Heart right ventricle (tissue), 16 donors: ENCODE measurements at regions of chr15 and their contacts with region 1.

Region 1: DNA sequence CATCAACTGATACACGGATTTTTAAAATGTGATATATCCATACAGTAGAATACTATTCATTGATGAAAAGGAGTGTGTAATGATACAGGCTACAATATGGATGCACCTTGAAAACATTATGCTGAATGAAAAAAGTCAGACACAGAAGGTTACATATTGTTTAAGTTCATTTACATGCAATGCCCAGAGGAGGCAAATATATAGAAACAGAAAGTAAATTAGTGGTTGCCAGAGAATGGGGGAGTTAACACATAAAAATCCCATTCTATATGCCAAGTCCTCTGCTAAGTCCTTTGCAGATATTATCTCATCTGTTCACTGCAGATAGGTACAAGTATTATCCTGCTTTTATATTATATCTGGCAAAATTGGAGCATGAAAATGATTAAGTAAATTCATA is 22.1 kb upstream of the CDIN1 start:
- DNase-seq: no peak
- ATAC-seq: no peak
- H3K4me3 ChIP-seq: no peak overlapping the region
- H3K27ac ChIP-seq: no peak overlapping the region
- H3K4me1 ChIP-seq: no peaks in the 10 kb centered on the region
- H3K27me3 ChIP-seq: no peaks in the 10 kb centered on the region
- CTCF ChIP-seq: no peak

Region 2: DNA sequence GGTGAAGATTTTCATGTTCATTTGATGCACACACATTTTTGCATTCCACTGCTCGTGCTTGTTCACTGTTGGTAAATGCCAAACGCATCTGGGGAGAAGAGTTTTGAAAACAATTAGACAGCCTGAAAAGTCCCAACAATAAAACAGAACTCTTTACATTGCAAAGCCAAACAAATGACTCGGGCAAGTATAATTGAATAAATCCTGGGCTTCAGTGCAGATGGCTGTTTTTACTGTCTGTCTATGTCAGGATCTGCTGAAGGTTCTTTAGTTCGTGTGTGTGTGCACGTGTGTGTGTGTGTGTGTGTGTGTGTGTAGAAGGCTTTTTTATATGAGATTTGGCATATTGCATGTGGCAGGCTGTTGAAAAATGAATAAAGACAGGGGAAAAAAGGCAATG is 255.4 kb before region 1 on chr15:
- intact Hi-C with region 1: no loop called
- DNase-seq: no peak
- ATAC-seq: no peak
- H3K4me3 ChIP-seq: no peak overlapping the region
- H3K27ac ChIP-seq: no peak overlapping the region
- H3K4me1 ChIP-seq: no peaks in the 10 kb centered on the region
- H3K27me3 ChIP-seq: no peaks in the 10 kb centered on the region
- CTCF ChIP-seq: no peak

Region 3: GRCh38 chr15:36612063-36612788 is 54.9 kb after region 1 on chr15:
- intact Hi-C with region 1: loop called in 1 of 10 experiments (anchors 5 kb)
- DNase-seq: no peak
- ATAC-seq: peak in 5 of 8 donors; percentile 53 to 82 (median 75)
- H3K4me3 ChIP-seq: no peak overlapping the region
- H3K27ac ChIP-seq: peak overlapping the region in 8 of 10 donors; percentile 18 to 90 (median 56)
- H3K4me1 ChIP-seq: peaks cover 0 to 25% (median 10%) of the 10 kb centered on the region in 9 donors
- H3K27me3 ChIP-seq: no peaks in the 10 kb centered on the region
- CTCF ChIP-seq: no peak